SK-N-SH (cell line): ENCODE measurements at regions of chr2 and their contacts with region 1.

Region 1: DNA sequence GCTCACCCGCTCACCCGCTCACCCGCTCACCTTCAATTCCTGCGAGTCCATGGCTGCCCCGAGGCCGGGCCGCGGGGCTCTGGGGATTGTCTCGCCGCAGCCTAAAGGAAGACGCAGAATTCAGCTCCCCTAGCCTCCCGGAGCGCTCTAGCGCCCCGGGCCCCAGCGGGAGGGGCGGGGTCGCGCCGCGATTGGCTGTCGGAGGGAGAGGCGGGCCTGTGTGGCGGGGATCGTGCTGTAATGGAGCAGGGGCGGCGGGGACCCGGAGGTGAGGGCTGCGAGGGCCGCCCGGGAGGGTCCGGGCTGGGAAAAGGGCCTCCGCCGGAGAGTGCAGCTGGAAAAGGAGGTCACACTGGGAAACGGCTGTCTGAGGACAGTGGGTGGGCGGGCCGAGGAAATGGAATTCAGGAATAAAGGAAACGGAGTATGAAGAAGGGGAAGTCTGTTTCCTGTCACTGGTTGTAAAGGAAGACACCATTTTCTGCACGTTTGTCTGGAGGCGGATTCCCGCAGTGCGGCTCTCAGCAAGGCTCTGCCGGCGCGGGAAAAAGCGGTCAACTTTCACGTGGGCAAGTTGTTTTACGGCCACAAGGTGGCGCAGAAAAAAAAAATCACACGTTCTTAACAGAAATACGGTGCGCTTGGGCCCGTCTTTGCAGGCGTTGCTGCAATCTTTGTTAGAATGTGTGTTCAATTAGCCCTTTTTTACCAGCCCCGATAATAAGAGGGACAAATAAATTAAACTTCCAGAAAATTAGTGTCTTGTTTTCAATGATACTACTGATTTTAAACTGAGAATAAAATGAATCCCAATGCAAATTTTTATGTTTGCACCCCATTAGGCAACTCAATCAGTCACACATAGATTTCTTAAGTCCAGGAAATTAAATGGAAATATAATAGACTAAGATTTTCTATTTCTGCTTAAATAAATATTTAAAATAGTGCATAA is at the start of gene TTC21B:
- DNase-seq: peak; percentile 97
- H3K4me3 ChIP-seq: peak within 1 kb of the TSS; percentile 71 to 85
- H3K27ac ChIP-seq: peak within 1 kb of the TSS; percentile 82 to 90
- H3K4me1 ChIP-seq: peaks cover 8% of the 10 kb centered on the region in 2 experiments; a peak in 3 of 4 replicates
- H3K27me3 ChIP-seq: no peaks in the 10 kb centered on the region
- CTCF ChIP-seq: peak; percentile 80
- EP300 ChIP-seq: no peak
- RAD21 ChIP-seq: peak; percentile 64
- polyA plus RNA-seq, gene TTC21B: 9.6 and 10.1 TPM in 2 replicates

Region 2: DNA sequence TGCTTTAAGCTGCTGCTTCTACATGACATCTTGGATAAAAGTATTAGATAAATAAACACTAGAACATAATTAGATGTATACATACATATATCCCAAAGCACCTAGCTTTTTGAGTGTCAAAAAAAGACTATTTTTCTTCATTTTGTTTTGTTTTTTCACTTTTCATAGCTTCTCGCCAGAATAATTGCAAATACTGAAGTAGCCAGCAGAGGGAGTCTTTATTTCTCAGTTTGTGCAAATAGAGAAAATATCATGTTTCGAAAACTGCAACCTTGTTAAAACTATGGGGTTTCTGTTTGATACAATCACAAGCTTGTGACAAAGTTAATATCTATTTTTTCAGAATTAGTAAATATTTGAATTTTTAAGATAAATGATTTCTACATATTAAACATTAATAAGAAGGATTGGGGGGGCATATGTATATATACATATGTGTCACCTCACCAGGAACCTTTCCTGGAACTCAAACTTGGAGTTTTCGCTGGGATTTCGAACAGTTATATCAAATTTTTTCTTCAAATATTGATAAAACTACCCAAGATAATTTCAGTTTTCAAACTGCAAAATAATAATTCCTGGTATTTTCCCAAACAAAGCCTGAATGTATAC is 1393.6 kb before region 1 on chr2:
- CTCF ChIA-PET with region 1: no interaction called
- POLR2A ChIA-PET with region 1: no interaction called
- DNase-seq: peak; percentile 10
- H3K4me3 ChIP-seq: no peak overlapping the region
- H3K27ac ChIP-seq: no peak overlapping the region
- H3K4me1 ChIP-seq: no peaks in the 10 kb centered on the region; a peak in 1 of 4 replicates
- H3K27me3 ChIP-seq: no peaks in the 10 kb centered on the region
- CTCF ChIP-seq: peak; percentile 86
- EP300 ChIP-seq: no peak
- RAD21 ChIP-seq: peak; percentile 69

Region 3: DNA sequence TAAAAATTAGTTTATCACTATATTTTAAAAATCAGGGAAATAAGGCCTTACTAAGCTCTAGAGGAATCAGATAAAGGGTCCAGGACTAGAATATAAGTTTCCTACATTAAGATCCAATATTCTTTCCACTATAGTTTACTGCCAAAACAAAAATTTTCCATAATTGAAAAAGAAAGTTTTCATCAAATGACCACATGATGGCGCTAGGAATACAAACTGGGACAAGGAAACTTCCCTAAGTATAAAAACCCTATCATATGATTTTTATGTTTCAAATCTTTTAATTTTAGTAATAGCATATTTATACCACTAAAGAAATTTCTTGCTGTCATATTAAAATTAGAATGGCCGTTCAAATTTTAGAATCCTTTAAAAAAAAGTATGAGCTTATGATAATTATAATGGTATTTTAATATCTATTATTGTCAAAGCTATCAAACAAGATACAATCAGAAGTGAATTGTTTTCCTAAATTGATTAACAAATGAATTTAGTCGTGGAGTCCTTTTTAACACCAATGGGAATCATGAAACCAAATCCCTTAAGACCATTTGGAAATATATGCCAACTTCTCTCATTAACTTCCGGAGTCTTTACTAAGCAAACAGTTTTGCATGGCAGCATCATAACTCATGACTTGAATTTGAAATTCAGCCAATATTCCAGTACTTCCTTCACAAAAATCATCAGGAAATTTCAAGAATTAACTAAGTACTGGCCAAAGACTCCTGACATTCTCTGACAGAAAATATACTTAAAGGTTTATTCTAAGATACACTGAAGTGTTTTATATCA is 103.6 kb after region 1 on chr2:
- CTCF ChIA-PET with region 1: interaction called, 16 read pairs
- POLR2A ChIA-PET with region 1: no interaction called
- DNase-seq: no peak
- H3K4me3 ChIP-seq: no peak overlapping the region; a peak in 1 of 4 replicates
- H3K27ac ChIP-seq: peak overlapping the region in 1 of 2 experiments; percentile 30; a peak in 2 of 4 replicates
- H3K4me1 ChIP-seq: peaks cover 0 to 6% of the 10 kb centered on the region in 2 experiments; a peak in 2 of 4 replicates
- H3K27me3 ChIP-seq: no peaks in the 10 kb centered on the region
- CTCF ChIP-seq: peak; percentile 81
- EP300 ChIP-seq: no peak
- RAD21 ChIP-seq: peak; percentile 69